Heart right ventricle (tissue), 16 donors: ENCODE measurements at regions of chr7 and their contacts with region 1.

Region 1: GRCh38 chr7:80552304-80552703 is 40.4 kb upstream of the GNAT3 start:
- DNase-seq: no peak
- ATAC-seq: no peak
- H3K4me3 ChIP-seq: no peak overlapping the region
- H3K27ac ChIP-seq: peak overlapping the region in 8 of 10 donors; percentile 30 to 78 (median 46)
- H3K4me1 ChIP-seq: peaks cover 2 to 48% (median 41%) of the 10 kb centered on the region in 9 donors
- H3K27me3 ChIP-seq: no peaks in the 10 kb centered on the region
- CTCF ChIP-seq: no peak

Region 2: DNA sequence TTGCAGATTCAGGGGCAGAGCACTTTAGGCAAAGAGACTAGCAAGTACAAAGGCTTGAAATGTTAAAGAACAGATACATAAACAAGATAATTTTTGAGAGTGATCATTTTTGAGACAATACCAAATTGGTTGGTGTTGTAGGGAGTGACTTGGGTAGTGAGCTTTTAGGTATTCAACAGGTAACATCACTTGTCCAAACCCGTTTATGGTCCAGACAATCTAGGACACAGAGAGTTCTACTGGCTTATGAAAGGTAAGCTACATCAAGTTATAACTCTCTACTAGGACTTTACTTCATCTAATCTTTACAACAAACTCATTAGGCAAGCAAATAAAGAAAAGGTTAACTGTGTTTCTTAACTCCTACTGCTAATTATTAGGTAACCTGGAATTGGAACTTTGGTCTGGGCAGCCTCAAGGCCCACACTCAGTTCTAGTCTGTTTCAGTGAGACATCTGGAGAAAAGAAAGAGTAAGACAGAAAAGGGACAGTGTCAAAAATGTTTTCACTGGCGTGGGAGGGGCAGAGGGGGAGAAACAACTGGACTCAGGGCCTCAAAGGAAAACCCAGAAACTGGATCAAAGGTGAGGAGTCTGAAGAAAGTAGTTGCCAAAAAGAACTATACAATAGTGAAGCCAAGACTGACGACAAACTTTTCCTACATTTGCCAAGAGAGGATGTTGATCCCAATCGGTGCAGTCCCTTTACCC is 79.7 kb before region 1 on chr7:
- intact Hi-C with region 1: loop called in 1 of 10 experiments (anchors 5 kb)
- DNase-seq: peak in 1 of 2 donors; percentile 34
- ATAC-seq: peak; percentile 30 to 78 (median 71)
- H3K4me3 ChIP-seq: no peak overlapping the region
- H3K27ac ChIP-seq: peak overlapping the region in 7 of 10 donors; percentile 7 to 63 (median 32)
- H3K4me1 ChIP-seq: peaks cover 0 to 54% (median 41%) of the 10 kb centered on the region in 9 donors
- H3K27me3 ChIP-seq: no peaks in the 10 kb centered on the region
- CTCF ChIP-seq: no peak

Region 3: GRCh38 chr7:80481200-80481884 is 71.0 kb before region 1 on chr7:
- intact Hi-C with region 1: loop called in 1 of 10 experiments (anchors 5 kb)
- DNase-seq: no peak
- ATAC-seq: peak in 6 of 8 donors; percentile 57 to 74 (median 62)
- H3K4me3 ChIP-seq: no peak overlapping the region
- H3K27ac ChIP-seq: peak overlapping the region in 7 of 10 donors; percentile 17 to 66 (median 49)
- H3K4me1 ChIP-seq: peaks cover 0 to 48% (median 16%) of the 10 kb centered on the region in 9 donors
- H3K27me3 ChIP-seq: no peaks in the 10 kb centered on the region
- CTCF ChIP-seq: no peak

Region 4: GRCh38 chr7:80499350-80499953 is 52.9 kb before region 1 on chr7:
- intact Hi-C with region 1: loop called in 1 of 10 experiments (anchors 2 kb)
- DNase-seq: peak; percentile 23 to 50
- ATAC-seq: peak; percentile 53 to 90 (median 87)
- H3K4me3 ChIP-seq: no peak overlapping the region
- H3K27ac ChIP-seq: peak overlapping the region in 9 of 10 donors; percentile 56 to 84 (median 68)
- H3K4me1 ChIP-seq: peaks cover 6 to 44% (median 33%) of the 10 kb centered on the region in 9 donors
- H3K27me3 ChIP-seq: no peaks in the 10 kb centered on the region
- CTCF ChIP-seq: no peak

Region 5: GRCh38 chr7:80584778-80585177 is 32.5 kb after region 1 on chr7:
- intact Hi-C with region 1: loop called in 1 of 10 experiments (anchors 5 kb)
- DNase-seq: no peak
- ATAC-seq: peak in 2 of 8 donors; percentile 28 to 59
- H3K4me3 ChIP-seq: no peak overlapping the region
- H3K27ac ChIP-seq: peak overlapping the region in 5 of 10 donors; percentile 23 to 79 (median 69)
- H3K4me1 ChIP-seq: peaks cover 2 to 63% (median 36%) of the 10 kb centered on the region in 9 donors
- H3K27me3 ChIP-seq: no peaks in the 10 kb centered on the region
- CTCF ChIP-seq: no peak

Region 6: DNA sequence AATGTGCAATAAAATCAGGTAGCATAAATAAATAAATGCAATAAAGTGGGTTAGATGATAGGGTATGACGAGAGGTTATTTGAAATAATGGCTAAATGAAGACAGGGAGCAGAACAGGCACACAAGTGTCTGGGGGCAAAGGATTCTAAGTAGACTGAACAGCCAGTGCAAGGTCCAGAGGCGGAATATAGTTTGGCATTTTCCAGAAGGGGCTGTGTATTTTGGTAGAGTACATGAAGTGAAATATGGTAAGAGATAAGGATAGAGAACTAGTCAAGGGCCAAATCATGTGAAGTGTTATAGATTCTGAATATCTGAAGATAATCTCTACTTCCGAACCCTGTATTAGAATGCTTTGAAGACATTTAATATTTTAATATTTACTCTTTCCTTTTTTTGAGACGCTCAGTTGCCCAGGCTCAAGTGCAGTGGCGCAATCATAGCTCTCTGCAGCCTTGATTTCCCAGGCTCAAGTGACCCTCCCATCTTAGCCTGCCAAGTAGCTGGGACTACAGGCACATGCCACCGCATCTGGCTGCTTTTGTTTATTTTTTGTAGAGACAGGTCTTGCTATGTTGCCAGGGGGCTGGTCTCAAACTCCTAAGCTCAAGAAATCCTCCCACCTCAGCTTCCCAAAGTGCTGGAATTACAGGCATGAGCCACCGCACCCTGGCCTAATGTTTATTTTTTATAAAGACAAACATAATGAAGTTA is 41.7 kb after region 1 on chr7:
- intact Hi-C with region 1: loop called in 3 of 10 experiments (anchors 2 to 5 kb)
- DNase-seq: peak in 1 of 2 donors; percentile 24
- ATAC-seq: peak in 6 of 8 donors; percentile 46 to 87 (median 64)
- H3K4me3 ChIP-seq: peak overlapping the region in 1 of 10 donors; percentile 7
- H3K27ac ChIP-seq: peak overlapping the region; percentile 45 to 87 (median 66)
- H3K4me1 ChIP-seq: peaks cover 2 to 78% (median 45%) of the 10 kb centered on the region in 9 donors
- H3K27me3 ChIP-seq: no peaks in the 10 kb centered on the region
- CTCF ChIP-seq: no peak

Region 7: GRCh38 chr7:80637911-80638765 is 85.8 kb after region 1 on chr7 and contains the start of gene CD36:
- intact Hi-C with region 1: loop called in 2 of 10 experiments (anchors 1 to 10 kb)
- DNase-seq: peak in 1 of 2 donors; percentile 70
- ATAC-seq: peak; percentile 58 to 80 (median 73)
- H3K4me3 ChIP-seq: peak within 1 kb of the TSS; percentile 34 to 63 (median 49)
- H3K27ac ChIP-seq: peak within 1 kb of the TSS; percentile 38 to 91 (median 78)
- H3K4me1 ChIP-seq: peaks cover 0 to 69% (median 48%) of the 10 kb centered on the region in 9 donors
- H3K27me3 ChIP-seq: no peaks in the 10 kb centered on the region
- CTCF ChIP-seq: no peak
- total RNA-seq, gene CD36: 509 to 1,458 (median 988) TPM